Naive thymus-derived CD4-positive, alpha-beta T cell (primary cell): ENCODE measurements at regions of chr19 and their contacts with region 1.

Region 1: GRCh38 chr19:54189735-54190502 is 539 bp upstream of the MBOAT7 start:
- DNase-seq: peak; percentile 98 to 100 (median 100)
- ATAC-seq: peak; percentile 73
- H3K4me3 ChIP-seq: peak overlapping the region; percentile 81
- H3K4me3 Mint-ChIP-seq: peak overlapping the region; percentile 90 to 100 (median 93)
- H3K27ac ChIP-seq: peak overlapping the region; percentile 99
- H3K27ac Mint-ChIP-seq: peak overlapping the region; percentile 97 to 100 (median 99)
- H3K4me1 ChIP-seq: peaks cover 20 to 22% of the 10 kb centered on the region in 2 donors
- H3K4me1 Mint-ChIP-seq: peaks cover 15 to 47% (median 39%) of the 10 kb centered on the region in 7 donors
- H3K27me3 ChIP-seq: no peaks in the 10 kb centered on the region
- H3K27me3 Mint-ChIP-seq: peaks cover 0 to 2% (median 0%) of the 10 kb centered on the region in 5 donors

Region 2: DNA sequence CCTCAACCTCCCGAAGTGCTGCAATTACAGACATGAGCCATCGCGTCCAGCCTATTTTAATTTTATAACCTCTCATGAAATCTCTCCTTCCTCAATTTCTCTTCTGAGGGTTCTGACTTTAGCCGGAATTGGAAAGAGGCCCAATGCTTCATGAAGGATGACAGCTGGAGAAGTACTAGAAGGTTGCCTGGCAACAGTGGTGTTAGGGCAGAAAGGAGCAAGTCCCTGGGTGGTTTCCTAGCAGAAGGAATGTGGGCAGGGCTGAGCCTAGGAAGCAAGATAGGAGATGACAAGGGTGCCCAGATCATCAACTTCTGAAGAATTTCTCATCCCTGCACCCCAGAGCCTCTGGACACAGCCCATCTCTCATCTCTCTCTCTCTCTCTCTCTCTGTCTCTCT is 172.7 kb before region 1 on chr19:
- CTCF ChIA-PET with region 1: no interaction called
- POLR2A ChIA-PET with region 1: no interaction called
- intact Hi-C with region 1: no loop called
- DNase-seq: no peak
- ATAC-seq: no peak
- H3K4me3 ChIP-seq: no peak overlapping the region
- H3K4me3 Mint-ChIP-seq: no peak overlapping the region
- H3K27ac ChIP-seq: no peak overlapping the region
- H3K27ac Mint-ChIP-seq: no peak overlapping the region
- H3K4me1 ChIP-seq: no peaks in the 10 kb centered on the region
- H3K4me1 Mint-ChIP-seq: peaks cover 0 to 11% (median 0%) of the 10 kb centered on the region in 7 donors
- H3K27me3 ChIP-seq: no peaks in the 10 kb centered on the region
- H3K27me3 Mint-ChIP-seq: peaks cover 2 to 57% (median 41%) of the 10 kb centered on the region in 5 donors

Region 3: DNA sequence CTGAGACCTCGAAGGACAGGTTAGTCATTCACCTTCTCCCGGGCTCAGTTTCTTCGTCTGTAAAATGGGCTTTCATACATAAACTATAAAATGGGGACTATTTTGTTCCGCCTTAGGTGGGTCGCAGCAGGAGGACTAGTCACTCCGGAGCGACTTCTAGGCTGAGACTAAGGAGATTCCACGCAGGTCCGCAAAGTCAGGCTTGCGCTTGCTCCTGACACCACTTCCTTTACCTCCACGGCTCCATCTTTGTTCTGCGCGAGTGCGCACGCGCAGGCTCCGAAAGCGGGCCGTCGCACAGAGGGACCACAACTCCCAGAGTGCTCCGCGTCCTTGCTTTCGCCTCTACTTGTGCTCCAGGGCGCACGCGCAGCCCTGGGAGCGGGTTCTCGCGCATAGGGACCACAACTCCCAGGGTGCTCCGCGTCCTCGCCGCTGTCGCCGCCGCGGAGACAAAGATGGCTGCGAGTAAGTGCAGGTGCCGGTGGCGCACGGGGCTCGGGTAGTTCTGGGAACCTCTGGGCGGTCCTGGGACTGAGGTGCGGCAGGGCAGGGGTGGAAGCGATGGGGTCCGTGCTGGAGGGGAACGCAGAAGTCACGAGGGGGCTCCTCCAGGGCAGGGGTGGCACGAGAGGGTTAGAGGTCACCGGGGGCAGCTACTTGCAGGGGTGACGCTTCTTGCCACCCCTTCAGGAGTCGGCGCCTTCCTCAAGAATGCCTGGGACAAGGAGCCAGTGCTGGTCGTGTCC is 87.3 kb before region 1 on chr19 and contains the start of gene NDUFA3:
- CTCF ChIA-PET with region 1: interaction called, 4 read pairs
- POLR2A ChIA-PET with region 1: interaction called, 5 read pairs
- intact Hi-C with region 1: loop called (anchors 1 kb)
- DNase-seq: peak; percentile 95 to 99 (median 97)
- ATAC-seq: peak; percentile 99
- H3K4me3 ChIP-seq: peak within 1 kb of the TSS; percentile 72
- H3K4me3 Mint-ChIP-seq: peak within 1 kb of the TSS; percentile 87 to 99 (median 98)
- H3K27ac ChIP-seq: peak within 1 kb of the TSS; percentile 77
- H3K27ac Mint-ChIP-seq: peak within 1 kb of the TSS; percentile 85 to 98 (median 94)
- H3K4me1 ChIP-seq: peaks cover 0 to 6% of the 10 kb centered on the region in 2 donors
- H3K4me1 Mint-ChIP-seq: peaks cover 5 to 40% (median 24%) of the 10 kb centered on the region in 7 donors
- H3K27me3 ChIP-seq: no peaks in the 10 kb centered on the region
- H3K27me3 Mint-ChIP-seq: peaks cover 0 to 6% (median 0%) of the 10 kb centered on the region in 5 donors
- total RNA-seq, gene NDUFA3: 64.4 to 127 (median 117) TPM

Region 4: GRCh38 chr19:54159352-54160181 is 30.4 kb before region 1 on chr19 and contains the start of gene LENG1:
- CTCF ChIA-PET with region 1: interaction called, 5 read pairs
- POLR2A ChIA-PET with region 1: interaction called, 66 read pairs
- intact Hi-C with region 1: loop called (anchors 1 kb)
- DNase-seq: peak; percentile 80 to 100 (median 99)
- ATAC-seq: peak; percentile 91
- H3K4me3 ChIP-seq: peak within 1 kb of the TSS; percentile 78
- H3K4me3 Mint-ChIP-seq: peak within 1 kb of the TSS; percentile 91 to 100 (median 98)
- H3K27ac ChIP-seq: peak within 1 kb of the TSS; percentile 87
- H3K27ac Mint-ChIP-seq: peak within 1 kb of the TSS; percentile 95 to 100 (median 99)
- H3K4me1 ChIP-seq: peaks cover 35 to 53% of the 10 kb centered on the region in 2 donors
- H3K4me1 Mint-ChIP-seq: peaks cover 47 to 88% (median 65%) of the 10 kb centered on the region in 7 donors
- H3K27me3 ChIP-seq: no peaks in the 10 kb centered on the region
- H3K27me3 Mint-ChIP-seq: no peaks in the 10 kb centered on the region
- total RNA-seq, gene LENG1: 7.1 to 20.4 (median 11.8) TPM

Region 5: DNA sequence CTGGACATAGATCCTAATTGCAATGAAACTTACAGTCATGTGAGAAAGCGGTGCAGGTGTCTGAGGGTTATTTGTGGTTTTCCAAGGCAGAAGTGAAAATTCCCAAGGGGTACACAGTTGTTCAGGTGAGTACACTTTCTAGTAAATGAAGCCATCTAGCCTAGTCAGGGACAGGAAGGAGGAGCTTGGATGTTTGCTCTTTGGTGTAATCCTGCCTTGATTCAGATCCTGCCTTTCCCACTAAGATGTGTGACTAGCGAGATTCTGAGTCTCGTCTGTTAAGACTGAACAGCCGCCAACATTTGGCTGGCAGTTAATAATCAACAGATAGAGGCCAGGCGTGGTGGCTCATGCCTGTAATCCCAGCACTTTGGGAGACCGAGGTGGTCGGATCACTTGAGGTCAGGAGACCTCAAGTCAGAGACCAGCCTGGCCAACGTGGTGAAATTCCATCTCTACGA is 13.3 kb after region 1 on chr19:
- CTCF ChIA-PET with region 1: interaction called, 3 read pairs
- POLR2A ChIA-PET with region 1: interaction called, 135 read pairs
- intact Hi-C with region 1: loop called (anchors 1 kb)
- DNase-seq: no peak
- ATAC-seq: no peak
- H3K4me3 ChIP-seq: no peak overlapping the region
- H3K4me3 Mint-ChIP-seq: peak overlapping the region in 9 of 10 donors; percentile 25 to 99 (median 98)
- H3K27ac ChIP-seq: peak overlapping the region; percentile 46
- H3K27ac Mint-ChIP-seq: peak overlapping the region in 3 of 9 donors; percentile 16 to 46 (median 38)
- H3K4me1 ChIP-seq: peaks cover 45 to 53% of the 10 kb centered on the region in 2 donors
- H3K4me1 Mint-ChIP-seq: peaks cover 30 to 86% (median 78%) of the 10 kb centered on the region in 7 donors
- H3K27me3 ChIP-seq: no peaks in the 10 kb centered on the region
- H3K27me3 Mint-ChIP-seq: peaks cover 0 to 4% (median 0%) of the 10 kb centered on the region in 5 donors

Region 6: DNA sequence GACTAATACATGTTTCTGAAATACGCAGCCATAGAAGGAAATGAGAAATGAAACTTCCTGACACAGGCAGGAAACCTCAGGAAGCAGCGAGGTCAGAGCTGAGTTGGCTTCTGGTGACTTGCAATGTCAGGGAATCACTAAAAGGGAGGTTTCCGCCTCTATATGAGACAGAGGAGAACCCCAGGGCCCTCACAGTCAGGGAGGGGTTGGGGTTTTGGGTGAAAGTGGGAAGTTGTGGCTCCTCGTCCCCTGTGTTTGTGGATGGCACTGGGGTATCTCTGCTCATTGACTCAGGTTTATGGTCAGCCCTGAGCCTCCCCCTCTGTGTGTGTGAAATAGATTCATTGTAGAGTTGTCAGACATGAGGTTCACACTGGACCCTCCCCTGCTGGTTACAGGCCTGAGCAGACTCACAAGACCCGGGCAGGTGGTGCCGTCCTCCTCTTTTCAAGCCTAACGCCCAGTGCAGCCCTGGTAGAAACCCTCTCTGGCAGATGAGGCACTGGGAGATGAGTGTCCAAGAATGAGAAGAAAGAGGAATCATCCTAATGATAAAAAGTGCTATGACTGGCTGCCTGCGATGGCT is 58.2 kb after region 1 on chr19:
- CTCF ChIA-PET with region 1: no interaction called
- POLR2A ChIA-PET with region 1: no interaction called
- intact Hi-C with region 1: no loop called
- DNase-seq: peak in 1 of 9 donors; percentile 10
- ATAC-seq: peak; percentile 91
- H3K4me3 ChIP-seq: no peak overlapping the region
- H3K4me3 Mint-ChIP-seq: peak overlapping the region in 8 of 10 donors; percentile 14 to 65 (median 47)
- H3K27ac ChIP-seq: no peak overlapping the region
- H3K27ac Mint-ChIP-seq: peak overlapping the region in 7 of 9 donors; percentile 1 to 55 (median 15)
- H3K4me1 ChIP-seq: peaks cover 0 to 9% of the 10 kb centered on the region in 2 donors
- H3K4me1 Mint-ChIP-seq: peaks cover 7 to 11% (median 10%) of the 10 kb centered on the region in 7 donors
- H3K27me3 ChIP-seq: no peaks in the 10 kb centered on the region
- H3K27me3 Mint-ChIP-seq: peaks cover 0 to 6% (median 0%) of the 10 kb centered on the region in 5 donors

Region 7: DNA sequence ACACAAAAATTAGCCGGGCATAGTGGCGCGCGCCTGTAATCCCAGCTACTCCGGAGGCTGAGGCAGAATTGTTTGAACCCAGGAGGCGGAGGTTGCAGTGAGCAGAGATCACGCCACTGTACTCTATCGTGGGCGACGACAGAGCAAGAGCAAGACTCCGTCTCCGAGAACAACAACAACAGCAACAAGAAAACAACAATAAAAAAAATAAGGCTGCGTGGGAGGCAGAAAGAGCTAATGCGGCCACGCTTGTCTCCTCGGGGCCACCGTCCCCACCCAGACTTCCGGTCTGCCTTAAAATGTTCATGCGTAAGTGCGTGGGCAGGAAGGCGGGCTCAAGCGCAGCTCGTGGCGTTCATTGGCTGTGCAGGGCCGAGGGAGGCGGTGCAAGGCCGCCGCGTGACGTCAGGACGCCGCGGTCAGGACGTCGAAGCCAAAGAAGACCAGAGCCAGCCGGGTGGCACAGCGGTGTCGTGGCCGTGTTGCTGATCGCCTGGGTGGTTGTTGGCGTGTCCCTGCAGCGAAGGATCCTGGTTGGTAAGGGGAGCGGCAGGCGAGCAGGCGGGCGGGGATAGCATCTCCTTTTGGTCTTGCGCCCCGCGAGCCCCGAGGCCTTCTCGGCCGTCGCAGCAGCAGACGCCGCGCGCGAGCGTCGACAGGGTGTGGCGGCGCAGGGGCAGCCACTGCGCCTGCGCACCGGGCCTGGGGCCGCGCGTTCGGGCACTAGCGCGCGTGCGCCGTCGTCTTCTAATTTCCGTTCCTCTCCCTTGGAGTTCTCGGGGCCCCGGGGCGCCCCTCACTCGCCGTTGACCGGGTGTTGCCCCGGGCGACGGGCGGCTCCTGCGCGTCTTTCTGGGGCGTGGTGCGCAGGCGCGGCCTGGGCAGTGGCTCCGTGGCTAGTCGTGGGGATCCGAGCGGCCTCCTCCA is 259.1 kb after region 1 on chr19 and contains the start of gene LENG8:
- CTCF ChIA-PET with region 1: no interaction called
- POLR2A ChIA-PET with region 1: interaction called, 7 read pairs
- intact Hi-C with region 1: loop called (anchors 1 kb)
- DNase-seq: peak; percentile 95 to 99 (median 98)
- ATAC-seq: peak; percentile 94
- H3K4me3 ChIP-seq: peak within 1 kb of the TSS; percentile 85
- H3K4me3 Mint-ChIP-seq: peak within 1 kb of the TSS; percentile 93 to 99 (median 97)
- H3K27ac ChIP-seq: peak within 1 kb of the TSS; percentile 94
- H3K27ac Mint-ChIP-seq: peak within 1 kb of the TSS; percentile 97 to 100 (median 100)
- H3K4me1 ChIP-seq: peaks cover 19 to 39% of the 10 kb centered on the region in 2 donors
- H3K4me1 Mint-ChIP-seq: peaks cover 31 to 61% (median 54%) of the 10 kb centered on the region in 7 donors
- H3K27me3 ChIP-seq: no peaks in the 10 kb centered on the region
- H3K27me3 Mint-ChIP-seq: peaks cover 0 to 3% (median 0%) of the 10 kb centered on the region in 5 donors
- total RNA-seq, gene LENG8: 238 to 685 (median 503) TPM

Region 8: DNA sequence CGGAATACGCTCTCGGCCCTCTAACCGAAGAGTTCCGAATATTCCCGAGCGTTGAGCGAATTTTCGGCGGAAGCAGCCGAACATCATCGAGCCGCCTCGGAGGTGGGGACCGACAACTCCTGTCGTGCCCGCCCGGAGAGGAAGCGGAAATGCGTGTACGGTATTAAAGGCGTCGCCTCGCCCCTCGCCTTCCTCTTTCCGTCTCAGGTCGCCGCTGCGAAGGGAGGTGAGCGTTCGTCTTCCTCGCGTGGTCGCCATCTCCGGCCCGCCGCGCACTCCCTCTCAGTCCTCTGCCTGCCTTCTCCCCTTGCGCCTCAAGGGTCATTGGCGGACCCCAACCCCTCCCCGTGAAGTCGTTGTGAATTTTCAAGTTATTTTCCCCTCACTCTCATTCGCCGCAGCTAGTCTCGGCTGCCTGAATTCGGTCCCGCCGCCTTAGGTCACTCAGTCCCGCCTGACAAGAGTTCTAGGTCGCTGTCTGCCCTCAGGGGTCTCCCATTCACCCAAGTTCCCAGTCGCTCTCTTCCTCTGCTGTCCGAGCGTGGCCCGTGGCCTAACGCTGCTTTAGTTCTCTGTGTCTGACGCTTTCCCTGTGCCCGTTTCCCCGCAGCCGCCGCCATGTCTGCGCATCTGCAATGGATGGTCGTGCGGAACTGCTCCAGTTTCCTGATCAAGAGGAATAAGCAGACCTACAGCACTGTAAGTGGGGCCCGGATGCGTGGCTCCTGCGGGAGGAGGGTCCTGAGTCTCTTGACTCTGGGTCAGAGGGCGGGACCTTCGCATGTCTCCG is 1196.0 kb after region 1 on chr19 and contains the start of gene RPL28:
- CTCF ChIA-PET with region 1: no interaction called
- POLR2A ChIA-PET with region 1: interaction called, 6 read pairs
- intact Hi-C with region 1: loop called in 1 of 2 experiments (anchors 10 kb)
- DNase-seq: peak; percentile 92 to 99 (median 99)
- ATAC-seq: peak; percentile 89
- H3K4me3 ChIP-seq: peak within 1 kb of the TSS; percentile 92
- H3K4me3 Mint-ChIP-seq: peak within 1 kb of the TSS; percentile 94 to 100 (median 100)
- H3K27ac ChIP-seq: peak within 1 kb of the TSS; percentile 91
- H3K27ac Mint-ChIP-seq: peak within 1 kb of the TSS; percentile 91 to 100 (median 99)
- H3K4me1 ChIP-seq: peaks cover 45 to 53% of the 10 kb centered on the region in 2 donors
- H3K4me1 Mint-ChIP-seq: peaks cover 41 to 79% (median 70%) of the 10 kb centered on the region in 7 donors
- H3K27me3 ChIP-seq: no peaks in the 10 kb centered on the region
- H3K27me3 Mint-ChIP-seq: peaks cover 0 to 3% (median 0%) of the 10 kb centered on the region in 5 donors
- total RNA-seq, gene RPL28: 2,549 to 3,799 (median 3,242) TPM

Region 9: GRCh38 chr19:55620410-55621204 is 1430.7 kb after region 1 on chr19:
- CTCF ChIA-PET with region 1: no interaction called
- POLR2A ChIA-PET with region 1: no interaction called
- intact Hi-C with region 1: no loop called
- DNase-seq: peak in 4 of 9 donors; percentile 33 to 48 (median 40)
- ATAC-seq: peak; percentile 10
- H3K4me3 ChIP-seq: no peak overlapping the region
- H3K4me3 Mint-ChIP-seq: peak overlapping the region in 6 of 10 donors; percentile 26 to 72 (median 50)
- H3K27ac ChIP-seq: peak overlapping the region; percentile 38
- H3K27ac Mint-ChIP-seq: peak overlapping the region in 8 of 9 donors; percentile 21 to 83 (median 66)
- H3K4me1 ChIP-seq: peaks cover 11 to 30% of the 10 kb centered on the region in 2 donors
- H3K4me1 Mint-ChIP-seq: peaks cover 19 to 46% (median 40%) of the 10 kb centered on the region in 7 donors
- H3K27me3 ChIP-seq: no peaks in the 10 kb centered on the region
- H3K27me3 Mint-ChIP-seq: no peaks in the 10 kb centered on the region